OCI-LY7 (cell line): ENCODE measurements at regions of chr10 and their contacts with region 1.

Region 1: GRCh38 chr10:92290837-92291615 is at the starts of genes CPEB3 and MARCHF5:
- DNase-seq: peak; percentile 95
- H3K4me3 ChIP-seq: peak within 1 kb of the TSS; percentile 100
- H3K27ac ChIP-seq: peak within 1 kb of the TSS; percentile 38
- H3K4me1 ChIP-seq: peaks cover 12% of the 10 kb centered on the region
- CTCF ChIP-seq: peak; percentile 60
- total RNA-seq, gene CPEB3: 0.26 and 0.66 TPM in 2 replicates
- total RNA-seq, gene MARCHF5: 3.8 and 5.9 TPM in 2 replicates

Region 2: DNA sequence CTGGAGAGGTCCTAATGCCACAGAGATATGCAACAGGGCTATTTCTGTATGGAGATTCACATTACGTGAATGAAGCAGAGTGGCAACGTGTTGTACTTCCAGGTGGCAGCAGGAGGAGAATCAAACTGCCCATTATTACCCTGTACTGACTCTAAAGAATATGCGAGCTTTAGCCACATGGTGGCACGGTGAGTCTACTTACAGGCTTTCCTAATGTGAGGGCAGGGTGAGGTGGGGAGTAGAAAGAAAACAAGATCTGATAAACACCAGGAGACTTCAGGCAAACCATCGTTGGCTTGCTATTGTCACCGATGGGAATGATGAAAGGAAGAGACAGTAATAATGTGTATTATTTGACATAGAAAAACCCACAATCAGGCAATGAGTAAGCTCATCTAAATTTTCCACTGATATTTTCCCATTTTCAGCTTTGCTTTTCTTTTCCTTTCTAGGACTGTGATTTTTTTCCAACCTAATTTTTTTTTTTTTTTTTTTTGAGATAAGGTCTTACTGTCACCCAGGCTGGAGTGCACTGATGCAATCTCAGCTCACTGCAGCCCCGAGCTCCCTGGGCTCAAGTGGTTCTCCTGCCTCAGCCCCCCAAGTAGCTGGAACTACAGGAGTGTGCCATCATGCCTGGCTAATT is 203.2 kb before region 1 on chr10:
- CTCF ChIA-PET with region 1: interaction called, 8 read pairs
- POLR2A ChIA-PET with region 1: interaction called, 6 read pairs
- intact Hi-C with region 1: loop called (anchors 1 kb)
- DNase-seq: peak; percentile 86
- H3K4me3 ChIP-seq: no peak overlapping the region
- H3K27ac ChIP-seq: no peak overlapping the region
- H3K4me1 ChIP-seq: peaks cover 4% of the 10 kb centered on the region
- CTCF ChIP-seq: peak; percentile 95

Region 3: GRCh38 chr10:92142949-92143348 is 148.1 kb before region 1 on chr10:
- CTCF ChIA-PET with region 1: interaction called, 3 read pairs
- POLR2A ChIA-PET with region 1: no interaction called
- intact Hi-C with region 1: loop called (anchors 1 kb)
- DNase-seq: peak; percentile 60
- H3K4me3 ChIP-seq: peak overlapping the region; percentile 59
- H3K27ac ChIP-seq: peak overlapping the region; percentile 78
- H3K4me1 ChIP-seq: peaks cover 61% of the 10 kb centered on the region
- CTCF ChIP-seq: no peak

Region 4: GRCh38 chr10:92181575-92181974 is 109.5 kb before region 1 on chr10:
- CTCF ChIA-PET with region 1: no interaction called
- POLR2A ChIA-PET with region 1: no interaction called
- intact Hi-C with region 1: loop called (anchors 5 kb)
- DNase-seq: peak; percentile 55
- H3K4me3 ChIP-seq: no peak overlapping the region
- H3K27ac ChIP-seq: peak overlapping the region; percentile 29
- H3K4me1 ChIP-seq: peaks cover 17% of the 10 kb centered on the region
- CTCF ChIP-seq: peak; percentile 71

Region 5: GRCh38 chr10:92240289-92241157 is 50.5 kb before region 1 on chr10:
- CTCF ChIA-PET with region 1: no interaction called
- POLR2A ChIA-PET with region 1: interaction called, 3 read pairs
- intact Hi-C with region 1: loop called (anchors 1 kb)
- DNase-seq: peak; percentile 79
- H3K4me3 ChIP-seq: peak overlapping the region; percentile 75
- H3K27ac ChIP-seq: peak overlapping the region; percentile 16
- H3K4me1 ChIP-seq: peaks cover 43% of the 10 kb centered on the region
- CTCF ChIP-seq: no peak

Region 6: GRCh38 chr10:92267343-92267742 is 23.7 kb before region 1 on chr10:
- CTCF ChIA-PET with region 1: no interaction called
- POLR2A ChIA-PET with region 1: interaction called, 13 read pairs
- intact Hi-C with region 1: no loop called
- DNase-seq: no peak
- H3K4me3 ChIP-seq: no peak overlapping the region
- H3K27ac ChIP-seq: no peak overlapping the region
- H3K4me1 ChIP-seq: no peaks in the 10 kb centered on the region
- CTCF ChIP-seq: no peak

Region 7: DNA sequence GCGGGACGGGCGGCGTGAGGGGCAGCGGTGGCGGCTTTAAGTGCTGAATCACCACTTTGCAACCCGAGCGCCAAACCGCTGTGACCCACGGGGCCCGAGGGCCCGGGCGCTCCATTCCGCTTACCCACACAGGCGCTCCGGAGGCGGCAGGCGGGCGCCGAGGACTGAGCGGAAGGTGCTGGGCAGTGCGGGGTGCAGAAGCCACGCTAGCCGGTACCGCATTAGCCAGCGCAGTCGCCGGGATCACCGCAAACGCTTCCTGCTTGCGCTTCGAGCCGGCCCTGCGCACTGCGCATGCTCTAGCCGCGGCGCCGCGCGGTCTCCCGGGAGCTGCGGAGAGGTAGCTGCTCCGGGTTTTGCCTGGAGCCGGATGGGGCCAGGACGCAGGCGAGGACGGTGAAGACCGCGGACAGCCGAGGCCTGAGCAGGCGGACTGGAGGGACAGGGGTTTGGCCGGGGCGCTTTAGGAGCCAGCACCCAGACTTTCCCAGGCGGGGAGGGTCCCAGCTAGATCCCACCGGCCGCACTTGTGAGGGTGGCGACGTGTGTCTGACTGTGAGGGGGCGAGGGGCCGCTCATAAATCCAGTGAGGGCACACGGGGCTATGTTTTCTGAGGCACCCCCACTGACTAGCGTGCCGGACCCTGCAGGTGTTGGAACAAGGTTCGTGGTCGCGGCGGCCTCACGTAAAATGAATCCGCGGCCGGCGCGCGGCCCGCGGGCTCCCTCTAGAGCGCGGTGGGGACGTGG is 282.9 kb after region 1 on chr10 and contains the start of gene IDE:
- CTCF ChIA-PET with region 1: no interaction called
- POLR2A ChIA-PET with region 1: no interaction called
- intact Hi-C with region 1: loop called (anchors 5 kb)
- DNase-seq: peak; percentile 89
- H3K4me3 ChIP-seq: peak within 1 kb of the TSS; percentile 95
- H3K27ac ChIP-seq: peak within 1 kb of the TSS; percentile 68
- H3K4me1 ChIP-seq: peaks cover 29% of the 10 kb centered on the region
- CTCF ChIP-seq: peak; percentile 83
- total RNA-seq, gene IDE: 14.2 and 14.3 TPM in 2 replicates